Heart left ventricle (tissue), 16 donors: ENCODE measurements at regions of chr14 and their contacts with region 1.

Region 1: DNA sequence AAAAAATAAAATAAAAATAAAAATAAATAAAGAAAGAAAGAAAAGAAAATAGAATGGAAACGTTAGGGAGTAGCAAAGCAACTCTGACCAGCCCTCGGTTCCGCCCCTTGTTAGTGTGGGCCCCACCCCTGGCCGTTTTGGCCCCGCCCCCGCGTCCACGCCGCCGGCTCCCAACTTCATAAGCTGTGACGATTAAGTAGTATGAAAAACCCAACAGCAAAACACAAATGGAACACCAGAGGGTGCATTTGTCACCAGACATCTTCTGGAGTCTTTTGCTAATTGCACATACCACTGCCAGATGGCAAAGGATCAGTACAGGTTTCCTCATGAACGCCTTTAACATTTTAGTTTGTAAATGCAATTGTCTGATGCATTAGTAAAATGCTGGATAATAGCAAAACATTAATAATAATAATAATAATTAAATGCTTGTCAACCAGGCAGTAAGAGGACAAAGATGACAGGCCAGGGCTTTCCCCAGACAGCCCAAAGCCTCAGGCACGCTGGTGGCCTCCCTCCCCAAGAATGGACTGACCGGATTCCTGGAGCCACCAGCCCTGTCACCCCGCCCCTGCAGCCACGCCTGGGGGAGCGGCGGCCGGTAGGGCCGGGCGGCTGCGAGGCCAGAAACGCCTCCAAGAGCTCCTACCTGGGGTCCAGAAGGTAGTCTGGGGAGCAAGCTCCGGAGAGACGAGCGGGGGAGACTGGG is 23.6 kb downstream of the HSP90AA1 start:
- DNase-seq: peak; percentile 83 to 92 (median 86)
- ATAC-seq: peak; percentile 57 to 98 (median 96)
- H3K4me3 ChIP-seq: peak overlapping the region in 1 of 12 donors; percentile 7
- H3K27ac ChIP-seq: no peak overlapping the region
- H3K4me1 ChIP-seq: peaks cover 0 to 11% (median 5%) of the 10 kb centered on the region in 12 donors
- H3K27me3 ChIP-seq: no peaks in the 10 kb centered on the region
- CTCF ChIP-seq: peak; percentile 29 to 64 (median 54)
- POLR2A ChIP-seq: no peak

Region 2: GRCh38 chr14:101737414-101738339 is 325.6 kb before region 1 on chr14:
- intact Hi-C with region 1: no loop called
- DNase-seq: no peak
- ATAC-seq: no peak
- H3K4me3 ChIP-seq: no peak overlapping the region
- H3K27ac ChIP-seq: no peak overlapping the region
- H3K4me1 ChIP-seq: no peaks in the 10 kb centered on the region
- H3K27me3 ChIP-seq: no peaks in the 10 kb centered on the region
- CTCF ChIP-seq: no peak
- POLR2A ChIP-seq: no peak

Region 3: GRCh38 chr14:101763941-101764709 is 299.1 kb before region 1 on chr14:
- intact Hi-C with region 1: no loop called
- DNase-seq: no peak
- ATAC-seq: no peak
- H3K4me3 ChIP-seq: no peak overlapping the region
- H3K27ac ChIP-seq: no peak overlapping the region
- H3K4me1 ChIP-seq: peaks cover 0 to 30% (median 11%) of the 10 kb centered on the region in 12 donors
- H3K27me3 ChIP-seq: no peaks in the 10 kb centered on the region
- CTCF ChIP-seq: no peak
- POLR2A ChIP-seq: no peak

Region 4: GRCh38 chr14:102096214-102097114 is 33.2 kb after region 1 on chr14:
- intact Hi-C with region 1: loop called in 9 of 10 experiments (anchors 1 to 5 kb)
- DNase-seq: peak; percentile 83 to 91 (median 87)
- ATAC-seq: peak; percentile 81 to 91 (median 86)
- H3K4me3 ChIP-seq: no peak overlapping the region
- H3K27ac ChIP-seq: no peak overlapping the region
- H3K4me1 ChIP-seq: peaks cover 0 to 9% (median 0%) of the 10 kb centered on the region in 12 donors
- H3K27me3 ChIP-seq: no peaks in the 10 kb centered on the region
- CTCF ChIP-seq: peak; percentile 69 to 91 (median 83)
- POLR2A ChIP-seq: no peak